A673 (cell line): ENCODE measurements at regions of chr6 and their contacts with region 1.

Region 1: DNA sequence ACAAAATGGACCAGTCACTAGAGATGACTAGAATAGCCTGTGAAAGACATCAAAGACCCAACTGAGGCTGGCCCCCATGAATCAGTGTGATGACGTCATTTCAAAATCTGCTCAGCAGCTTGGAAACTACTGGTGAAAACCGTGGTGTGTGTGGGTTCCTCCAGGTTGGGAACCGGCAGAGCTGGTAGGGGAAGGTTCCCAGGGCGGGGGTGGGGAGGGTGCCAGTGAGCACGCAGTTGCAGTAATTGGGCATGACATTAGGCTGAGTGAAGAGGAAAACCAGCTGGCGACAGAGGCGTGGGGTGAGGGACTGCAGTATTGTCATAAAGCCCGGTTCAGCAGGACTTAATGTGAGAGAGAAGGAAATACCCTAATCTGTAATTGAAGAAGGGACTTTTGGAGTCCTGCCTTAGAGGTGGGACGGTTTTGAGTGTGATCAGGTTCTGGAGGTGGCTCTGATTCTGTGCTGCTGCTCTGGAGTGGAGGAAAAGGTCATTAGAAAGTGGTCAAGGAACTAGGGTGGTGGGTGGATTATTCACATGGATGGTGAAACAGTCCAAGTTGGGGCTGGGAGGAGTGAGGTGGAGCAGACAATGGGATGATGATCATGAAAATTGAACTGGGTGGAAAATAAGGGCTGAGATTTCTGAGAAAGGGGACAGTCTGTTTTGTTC is 52.0 kb upstream of the MTHFD1L start:
- DNase-seq: peak; percentile 84
- H3K4me3 ChIP-seq: no peak overlapping the region
- H3K27ac ChIP-seq: peak overlapping the region; percentile 61
- H3K4me1 ChIP-seq: peaks cover 30% of the 10 kb centered on the region
- H3K27me3 ChIP-seq: no peaks in the 10 kb centered on the region
- CTCF ChIP-seq: no peak

Region 2: DNA sequence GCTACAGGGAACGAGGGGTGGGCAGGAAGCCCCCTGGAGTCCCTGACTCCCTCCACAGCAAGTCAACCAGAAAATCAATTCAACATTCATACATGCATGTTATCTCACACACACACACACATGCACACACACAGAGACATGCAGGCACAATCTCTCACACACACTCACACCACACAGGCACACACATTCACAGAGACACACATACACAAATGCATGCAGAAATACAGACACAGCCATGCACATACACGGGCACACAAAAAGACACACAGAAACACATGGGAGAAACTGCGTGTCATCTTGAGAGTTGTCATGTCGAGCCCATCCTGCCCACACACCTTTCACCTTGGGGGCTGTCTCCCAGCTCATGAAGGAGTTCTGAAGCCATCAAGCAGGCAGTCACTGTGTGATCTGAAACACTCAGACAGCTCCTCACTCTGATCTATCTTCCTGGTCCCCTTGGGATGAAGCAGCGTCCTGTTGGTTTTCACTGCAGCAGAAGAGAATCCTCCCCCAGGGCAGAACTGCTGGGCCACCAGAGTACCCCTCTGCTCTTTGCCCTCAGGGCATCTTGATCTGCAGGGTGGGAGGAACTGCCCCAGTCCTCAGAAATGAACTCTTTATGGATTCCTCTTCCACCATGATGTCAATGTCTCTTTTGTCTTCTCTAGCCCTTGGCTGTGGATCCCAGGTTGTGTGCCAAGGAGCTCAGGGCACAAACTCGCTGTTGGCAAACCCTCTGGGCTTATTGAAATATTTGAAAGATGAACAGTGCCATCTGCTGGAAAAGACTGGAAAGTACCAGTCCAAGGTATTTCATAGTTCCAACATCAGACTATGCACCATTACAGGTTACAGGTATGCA is 796.9 kb before region 1 on chr6:
- CTCF ChIA-PET with region 1: no interaction called
- POLR2A ChIA-PET with region 1: no interaction called
- intact Hi-C with region 1: loop called (anchors 5 kb)
- DNase-seq: peak; percentile 82
- H3K4me3 ChIP-seq: no peak overlapping the region
- H3K27ac ChIP-seq: no peak overlapping the region
- H3K4me1 ChIP-seq: no peaks in the 10 kb centered on the region
- H3K27me3 ChIP-seq: peaks cover 54% of the 10 kb centered on the region
- CTCF ChIP-seq: peak; percentile 60

Region 3: GRCh38 chr6:150343434-150343833 is 470.0 kb before region 1 on chr6:
- CTCF ChIA-PET with region 1: no interaction called
- POLR2A ChIA-PET with region 1: no interaction called
- intact Hi-C with region 1: loop called (anchors 5 kb)
- DNase-seq: no peak
- H3K4me3 ChIP-seq: no peak overlapping the region
- H3K27ac ChIP-seq: no peak overlapping the region
- H3K4me1 ChIP-seq: no peaks in the 10 kb centered on the region
- H3K27me3 ChIP-seq: no peaks in the 10 kb centered on the region
- CTCF ChIP-seq: no peak

Region 4: GRCh38 chr6:151330134-151330696 is 516.8 kb after region 1 on chr6:
- CTCF ChIA-PET with region 1: interaction called, 15 read pairs
- POLR2A ChIA-PET with region 1: interaction called, 5 read pairs
- intact Hi-C with region 1: loop called (anchors 2 kb)
- DNase-seq: peak; percentile 78
- H3K4me3 ChIP-seq: no peak overlapping the region
- H3K27ac ChIP-seq: no peak overlapping the region
- H3K4me1 ChIP-seq: peaks cover 49% of the 10 kb centered on the region
- H3K27me3 ChIP-seq: no peaks in the 10 kb centered on the region
- CTCF ChIP-seq: no peak